ENCODE measurements at regions of chr2 and their contacts with region 1.

Region 1: GRCh38 chr2:127293748-127294562 is at the start of gene ERCC3:
- DNase-seq: peak; percentile 7
- ATAC-seq: peak; percentile 99
- H3K4me3 ChIP-seq: peak within 1 kb of the TSS; percentile 88 to 94
- H3K27ac ChIP-seq: peak within 1 kb of the TSS; percentile 96
- H3K4me1 ChIP-seq: peaks cover 7% of the 10 kb centered on the region
- H3K27me3 ChIP-seq: no peaks in the 10 kb centered on the region
- CTCF ChIP-seq: no peak
- total RNA-seq, gene ERCC3: 38.0 TPM

Region 2: DNA sequence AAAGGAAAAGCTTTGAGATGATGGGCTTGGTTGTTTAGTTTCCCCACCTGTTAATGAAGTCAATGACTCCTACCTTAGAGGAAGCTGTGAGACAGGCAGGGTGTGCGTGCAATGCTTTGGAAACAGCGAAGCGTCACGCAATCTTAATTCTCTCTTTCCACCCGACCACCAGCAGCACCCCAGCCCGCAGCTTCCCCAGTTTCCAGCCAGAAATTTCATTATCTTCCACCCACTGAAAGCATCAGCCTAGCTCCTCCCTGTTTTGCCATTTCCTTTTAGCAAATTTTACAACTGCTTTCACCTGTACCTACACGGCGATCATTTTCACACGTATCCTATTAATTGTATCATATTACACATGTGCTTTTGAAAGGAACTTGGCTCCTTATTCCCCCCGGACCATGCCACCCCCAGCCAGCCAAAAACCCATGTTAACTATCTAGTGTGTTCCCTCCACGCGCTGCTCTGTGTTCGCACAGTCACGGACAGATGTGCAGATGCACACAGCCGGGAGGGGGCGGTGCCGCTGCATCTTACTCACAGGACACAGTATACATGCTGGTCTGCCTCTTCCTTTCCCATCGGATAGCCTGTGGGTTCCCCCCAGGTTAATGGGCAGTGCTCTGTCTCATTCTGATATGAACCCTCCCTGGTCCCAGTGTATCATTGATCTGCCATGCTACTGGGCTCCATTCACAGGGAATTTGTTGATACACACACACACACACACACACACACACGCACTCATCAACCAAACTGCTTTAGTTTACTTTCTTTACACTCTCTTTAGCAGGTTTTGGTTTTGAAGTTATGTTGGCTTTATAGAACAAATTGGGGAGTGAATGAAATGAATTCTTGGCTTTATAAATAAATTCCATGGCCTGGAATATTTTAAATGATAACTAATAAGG is 96.2 kb before region 1 on chr2:
- CTCF ChIA-PET with region 1: interaction called, 8 read pairs
- POLR2A ChIA-PET with region 1: no interaction called
- in situ Hi-C with region 1: no loop called
- intact Hi-C with region 1: loop called (anchors 5 kb)
- DNase-seq: no peak
- ATAC-seq: peak; percentile 99
- H3K4me3 ChIP-seq: peak overlapping the region; percentile 7 to 40; a peak in 3 of 4 replicates
- H3K27ac ChIP-seq: no peak overlapping the region
- H3K4me1 ChIP-seq: 0 out of 2 replicates have a peak, but pooled peaks cover 3% of the 10 kb centered on the region
- H3K27me3 ChIP-seq: no peaks in the 10 kb centered on the region
- CTCF ChIP-seq: peak; percentile 85